Activated CD8-positive, alpha-beta T cell treated with anti-CD3 and anti-CD28 coated beads for 36 hours (primary cell): ENCODE measurements at regions of chr5 and their contacts with region 1.

Region 1: GRCh38 chr5:69189162-69190086 is at the start of gene CENPH:
- DNase-seq: peak; percentile 94
- ATAC-seq: peak; percentile 91
- H3K4me3 Mint-ChIP-seq: peak within 1 kb of the TSS; percentile 98
- H3K27ac Mint-ChIP-seq: peak within 1 kb of the TSS; percentile 98
- H3K4me1 Mint-ChIP-seq: peaks cover 12% of the 10 kb centered on the region
- H3K27me3 Mint-ChIP-seq: no peaks in the 10 kb centered on the region
- CTCF ChIP-seq: no peak
- total RNA-seq, gene CENPH: 97.0 to 98.6 TPM

Region 2: GRCh38 chr5:69166686-69167492 is 22.5 kb before region 1 on chr5 and contains the start of gene CCNB1:
- CTCF ChIA-PET with region 1: interaction called, 5 read pairs
- POLR2A ChIA-PET with region 1: interaction called, 17 read pairs
- intact Hi-C with region 1: no loop called
- DNase-seq: peak; percentile 99
- ATAC-seq: peak; percentile 100
- H3K4me3 Mint-ChIP-seq: peak within 1 kb of the TSS; percentile 89
- H3K27ac Mint-ChIP-seq: peak within 1 kb of the TSS; percentile 87
- H3K4me1 Mint-ChIP-seq: peaks cover 22% of the 10 kb centered on the region
- H3K27me3 Mint-ChIP-seq: no peaks in the 10 kb centered on the region
- CTCF ChIP-seq: no peak
- total RNA-seq, gene CCNB1: 167 to 175 TPM

Region 3: GRCh38 chr5:69224520-69224919 is 35.1 kb after region 1 on chr5:
- CTCF ChIA-PET with region 1: no interaction called
- POLR2A ChIA-PET with region 1: no interaction called
- intact Hi-C with region 1: no loop called
- DNase-seq: no peak
- ATAC-seq: no peak
- H3K4me3 Mint-ChIP-seq: no peak overlapping the region
- H3K27ac Mint-ChIP-seq: no peak overlapping the region
- H3K4me1 Mint-ChIP-seq: peaks cover 4% of the 10 kb centered on the region
- H3K27me3 Mint-ChIP-seq: no peaks in the 10 kb centered on the region
- CTCF ChIP-seq: no peak